A673 (cell line): ENCODE measurements at regions of chr13 and their contacts with region 1.

Region 1: DNA sequence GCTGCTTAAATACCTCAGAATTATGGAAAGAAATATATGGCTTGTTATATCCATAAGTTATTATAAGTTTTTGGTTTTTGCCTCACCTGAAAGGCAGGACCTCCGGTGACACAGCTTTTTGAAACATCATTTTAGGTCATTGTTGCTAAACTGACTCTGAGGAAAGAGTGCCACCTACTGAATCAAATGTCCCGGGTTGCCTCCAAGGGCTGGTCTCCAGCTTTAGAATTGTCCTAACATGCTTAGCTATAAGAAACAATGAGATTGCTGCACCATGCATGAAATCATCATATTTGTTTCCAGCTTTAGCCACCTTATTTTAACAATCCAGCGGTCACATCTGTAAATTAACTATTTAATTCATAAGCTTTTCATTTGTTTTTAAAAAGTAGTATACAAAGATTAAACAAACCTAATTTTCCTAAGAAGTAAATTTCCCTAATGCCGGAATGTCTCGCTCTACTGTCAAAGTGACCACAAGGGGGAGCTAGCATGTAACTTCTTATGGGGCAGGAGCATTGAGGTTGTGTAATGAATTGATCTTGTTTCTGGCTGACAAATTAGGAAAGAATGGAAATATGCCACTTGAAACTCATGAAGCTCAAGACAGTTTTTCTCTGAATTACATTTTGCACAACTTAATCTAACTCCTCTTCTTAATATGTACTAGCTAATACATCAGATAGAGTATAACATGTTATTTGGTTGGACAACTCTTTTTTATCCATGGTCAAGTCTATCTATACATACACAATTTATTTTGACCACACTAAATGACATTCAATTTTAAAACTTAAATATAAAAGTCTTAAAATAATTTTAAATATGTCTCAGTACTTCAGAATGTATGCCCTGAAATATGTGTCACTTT is 6.7 kb upstream of the PCDH17 start:
- DNase-seq: peak; percentile 87
- H3K4me3 ChIP-seq: no peak overlapping the region
- H3K27ac ChIP-seq: no peak overlapping the region
- H3K4me1 ChIP-seq: peaks cover 22% of the 10 kb centered on the region
- H3K27me3 ChIP-seq: no peaks in the 10 kb centered on the region
- CTCF ChIP-seq: peak; percentile 93

Region 2: DNA sequence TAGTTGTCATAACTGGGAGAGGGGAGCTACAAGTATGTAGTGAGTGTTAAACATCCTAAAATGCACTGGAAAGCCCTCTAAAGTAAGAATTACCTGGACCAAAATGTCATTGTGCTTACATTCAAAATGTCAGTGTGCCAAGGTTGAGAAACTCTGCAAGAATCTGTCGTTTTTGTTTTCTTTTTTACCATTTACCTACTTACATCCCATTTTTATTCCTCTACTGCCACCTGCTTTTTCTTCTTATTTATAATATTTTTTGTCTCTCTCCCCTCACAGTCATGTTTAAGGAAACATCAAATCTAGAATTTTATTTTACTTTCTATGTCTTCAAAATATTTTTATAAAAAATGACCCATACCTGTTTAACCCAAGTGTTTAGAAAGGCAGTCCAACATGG is 233.1 kb after region 1 on chr13:
- CTCF ChIA-PET with region 1: interaction called, 3 read pairs
- POLR2A ChIA-PET with region 1: no interaction called
- intact Hi-C with region 1: loop called (anchors 5 kb)
- DNase-seq: peak; percentile 5
- H3K4me3 ChIP-seq: no peak overlapping the region
- H3K27ac ChIP-seq: no peak overlapping the region
- H3K4me1 ChIP-seq: no peaks in the 10 kb centered on the region
- H3K27me3 ChIP-seq: no peaks in the 10 kb centered on the region
- CTCF ChIP-seq: no peak; the same call in 1 of the 2 replicates

Region 3: DNA sequence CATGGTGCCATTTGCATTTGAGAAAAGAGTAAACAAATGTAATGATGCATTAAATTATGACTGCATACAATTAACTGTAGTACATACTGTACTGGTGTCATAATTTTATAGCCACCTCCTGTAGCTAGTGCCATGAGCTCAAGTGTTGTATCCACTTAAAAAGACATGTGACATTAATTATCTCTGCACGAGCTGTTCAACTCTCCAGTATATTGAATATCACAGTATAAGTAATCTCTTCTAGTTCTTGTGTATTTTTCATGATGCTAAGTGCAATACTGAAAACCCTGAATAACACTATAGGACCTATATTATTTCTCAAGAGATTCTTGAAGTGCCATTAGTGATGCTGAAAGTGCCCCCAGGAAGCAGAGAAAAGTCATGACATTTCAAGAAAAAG is 394.1 kb after region 1 on chr13:
- CTCF ChIA-PET with region 1: no interaction called
- POLR2A ChIA-PET with region 1: no interaction called
- intact Hi-C with region 1: no loop called
- DNase-seq: peak; percentile 40
- H3K4me3 ChIP-seq: no peak overlapping the region
- H3K27ac ChIP-seq: no peak overlapping the region
- H3K4me1 ChIP-seq: no peaks in the 10 kb centered on the region
- H3K27me3 ChIP-seq: no peaks in the 10 kb centered on the region
- CTCF ChIP-seq: no peak